A549 (cell line): ENCODE measurements at regions of chr16 and their contacts with region 1.

Region 1: GRCh38 chr16:85010931-85011845 is at the start of gene ZDHHC7:
- DNase-seq: peak; percentile 85 to 88
- ATAC-seq: peak; percentile 96 to 98
- H3K4me3 ChIP-seq: peak within 1 kb of the TSS; percentile 87
- H3K27ac ChIP-seq: peak within 1 kb of the TSS; percentile 99
- H3K4me1 ChIP-seq: peaks cover 32% of the 10 kb centered on the region
- CTCF ChIP-seq: no peak
- EP300 ChIP-seq: 0 out of 5 replicates have a peak, but pooled peaks of 1 of the 2 experiments have one; percentile 20
- POLR2A ChIP-seq: peak; percentile 89
- RAD21 ChIP-seq: peak in 1 of 2 experiments; percentile 22; a peak in 2 of 5 replicates
- polyA plus RNA-seq, gene ZDHHC7: 58.0 and 88.6 TPM in 2 replicates

Region 2: DNA sequence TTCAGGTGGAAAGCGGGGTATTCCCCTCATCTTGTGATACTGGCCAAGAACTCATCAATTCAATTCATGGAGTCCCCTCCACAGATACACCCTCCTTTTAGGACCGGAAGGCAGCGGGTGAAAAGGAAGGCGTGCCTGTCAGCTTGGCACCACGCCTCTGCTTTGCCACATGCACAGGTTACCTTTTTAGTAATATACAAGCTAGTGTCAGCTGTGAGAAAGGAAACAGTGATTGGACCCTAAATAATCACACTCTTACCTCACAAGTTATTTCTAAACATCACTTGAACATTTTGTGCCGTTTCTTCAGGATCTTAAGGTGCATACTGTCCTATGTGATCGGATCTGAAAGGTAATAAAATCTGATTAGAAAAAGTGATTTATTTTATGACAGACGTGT is 15.5 kb before region 1 on chr16:
- CTCF ChIA-PET with region 1: interaction called, 10 read pairs
- POLR2A ChIA-PET with region 1: interaction called, 11 read pairs
- DNase-seq: no peak
- ATAC-seq: no peak
- H3K4me3 ChIP-seq: peak overlapping the region; percentile 15; the same call in 1 of the 3 replicates
- H3K27ac ChIP-seq: peak overlapping the region; percentile 94 to 96
- H3K4me1 ChIP-seq: peaks cover 71% of the 10 kb centered on the region
- CTCF ChIP-seq: no peak
- EP300 ChIP-seq: no peak
- POLR2A ChIP-seq: no peak
- RAD21 ChIP-seq: no peak